ENCODE measurements at regions of chr2 and their contacts with region 1.

Region 1: DNA sequence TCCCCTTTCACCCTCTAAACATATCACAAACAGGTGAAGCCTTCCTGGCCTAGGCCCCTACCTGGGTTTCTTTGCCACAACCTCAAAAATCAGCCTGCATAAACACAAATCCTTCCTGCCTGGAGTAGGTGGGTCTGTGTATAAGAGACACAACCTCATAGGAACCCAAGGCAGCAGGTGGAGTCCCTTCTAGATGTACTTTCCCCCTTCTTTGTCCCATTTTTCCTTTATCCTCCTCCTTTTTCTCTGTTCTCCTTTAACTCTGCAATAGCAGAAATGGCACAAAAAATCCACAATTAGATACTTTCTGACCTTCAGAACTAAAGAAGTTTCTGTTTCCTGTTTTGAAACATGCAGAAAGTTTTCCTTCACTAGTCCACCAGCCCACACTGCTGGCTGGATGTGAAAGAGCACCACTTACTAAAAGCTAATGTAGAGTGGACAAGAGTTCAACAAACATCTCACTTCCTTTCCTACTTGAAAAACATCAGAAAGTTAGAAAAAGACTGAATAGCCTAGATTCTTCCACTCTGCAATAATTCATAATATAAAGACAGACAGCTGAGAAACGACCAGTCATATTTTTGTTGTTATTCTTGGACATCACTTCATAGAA is 11.2 kb downstream of the SLC40A1 start:
- DNase-seq: no peak
- ATAC-seq: peak in 2 of 4 experiments; percentile 32 to 38
- H3K4me3 ChIP-seq: no peak overlapping the region
- H3K4me3 Mint-ChIP-seq: peak overlapping the region in 1 of 3 donors; percentile 35
- H3K27ac ChIP-seq: no peak overlapping the region
- H3K27ac Mint-ChIP-seq: peak overlapping the region; percentile 93 to 94
- H3K4me1 ChIP-seq: peaks cover 0 to 19% of the 10 kb centered on the region in 2 experiments
- H3K4me1 Mint-ChIP-seq: peaks cover 37 to 68% (median 62%) of the 10 kb centered on the region in 3 donors
- H3K27me3 ChIP-seq: no peaks in the 10 kb centered on the region
- H3K27me3 Mint-ChIP-seq: no peaks in the 10 kb centered on the region

Region 2: DNA sequence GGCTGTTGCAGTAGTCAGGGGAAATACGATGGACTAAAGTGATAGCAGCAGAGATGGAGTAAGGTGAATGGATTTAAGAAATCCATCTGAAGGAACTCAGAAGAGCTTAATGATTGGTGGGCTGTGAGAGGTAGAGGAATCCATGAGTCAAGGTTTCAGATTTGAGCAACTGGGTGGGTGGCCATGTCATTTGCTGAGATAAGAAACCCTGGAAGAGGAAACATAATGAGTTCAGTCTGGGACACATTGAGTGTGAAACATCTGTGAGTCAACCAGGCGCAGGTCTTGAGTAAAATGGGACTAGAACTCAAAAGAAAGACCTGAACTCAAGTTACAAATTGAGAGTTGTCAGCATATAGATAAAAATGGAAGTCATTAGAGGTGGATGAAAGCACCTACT is 72.2 kb after region 1 on chr2:
- CTCF ChIA-PET with region 1: no interaction called
- POLR2A ChIA-PET with region 1: interaction called in 1 of 2 experiments, 10 read pairs
- DNase-seq: no peak
- ATAC-seq: no peak
- H3K4me3 ChIP-seq: no peak overlapping the region
- H3K4me3 Mint-ChIP-seq: no peak overlapping the region
- H3K27ac ChIP-seq: no peak overlapping the region
- H3K27ac Mint-ChIP-seq: no peak overlapping the region
- H3K4me1 ChIP-seq: no peaks in the 10 kb centered on the region
- H3K4me1 Mint-ChIP-seq: peaks cover 0 to 1% (median 0%) of the 10 kb centered on the region in 3 donors
- H3K27me3 ChIP-seq: no peaks in the 10 kb centered on the region
- H3K27me3 Mint-ChIP-seq: no peaks in the 10 kb centered on the region

Measured in T-cell (primary cell).